ENCODE measurements at regions of chr5 and their contacts with region 1.

Region 1: DNA sequence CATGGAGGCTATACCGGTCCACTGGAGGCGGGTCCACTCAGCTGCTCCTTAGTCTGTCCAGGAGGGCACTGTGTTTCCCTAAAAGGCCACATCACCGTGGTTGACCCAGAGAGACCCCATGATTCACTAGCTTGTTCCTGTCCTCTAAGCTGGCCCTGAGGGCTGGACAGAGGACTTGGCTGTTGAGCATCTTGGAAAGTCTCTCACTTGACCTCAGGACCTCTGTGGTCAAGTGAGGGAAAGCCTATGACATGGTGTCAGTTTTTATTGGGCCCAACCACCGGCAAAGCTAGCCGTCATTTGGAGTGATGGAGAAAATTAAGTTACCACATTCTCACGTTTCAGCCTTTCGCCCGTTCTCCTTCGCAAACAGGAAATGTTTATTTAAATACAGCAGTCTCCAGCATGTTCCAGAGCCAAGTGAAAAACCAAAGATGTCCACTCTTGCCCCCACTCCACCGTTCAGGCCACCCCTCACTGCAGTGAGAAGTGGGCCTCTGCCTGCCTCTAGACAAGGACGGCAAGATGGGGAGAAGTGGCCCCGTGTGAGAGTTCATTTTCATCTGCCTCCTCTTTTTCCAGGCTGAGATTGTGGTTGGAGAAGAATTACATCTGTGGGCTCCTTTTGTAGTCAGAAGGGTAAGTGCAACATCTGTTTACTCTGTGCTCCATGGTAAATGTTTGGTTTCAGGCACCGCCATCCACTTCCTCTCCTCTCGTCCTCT is 4.4 kb downstream of the SLIT3 start:
- DNase-seq: no peak
- ATAC-seq: no peak
- H3K4me3 ChIP-seq: no peak overlapping the region
- H3K27ac ChIP-seq: no peak overlapping the region
- H3K4me1 ChIP-seq: no peaks in the 10 kb centered on the region
- H3K27me3 ChIP-seq: peaks cover 2 to 14% of the 10 kb centered on the region in 2 experiments; a peak in 4 of 5 replicates
- CTCF ChIP-seq: no peak
- EP300 ChIP-seq: no peak
- POLR2A ChIP-seq: no peak
- RAD21 ChIP-seq: no peak

Region 2: DNA sequence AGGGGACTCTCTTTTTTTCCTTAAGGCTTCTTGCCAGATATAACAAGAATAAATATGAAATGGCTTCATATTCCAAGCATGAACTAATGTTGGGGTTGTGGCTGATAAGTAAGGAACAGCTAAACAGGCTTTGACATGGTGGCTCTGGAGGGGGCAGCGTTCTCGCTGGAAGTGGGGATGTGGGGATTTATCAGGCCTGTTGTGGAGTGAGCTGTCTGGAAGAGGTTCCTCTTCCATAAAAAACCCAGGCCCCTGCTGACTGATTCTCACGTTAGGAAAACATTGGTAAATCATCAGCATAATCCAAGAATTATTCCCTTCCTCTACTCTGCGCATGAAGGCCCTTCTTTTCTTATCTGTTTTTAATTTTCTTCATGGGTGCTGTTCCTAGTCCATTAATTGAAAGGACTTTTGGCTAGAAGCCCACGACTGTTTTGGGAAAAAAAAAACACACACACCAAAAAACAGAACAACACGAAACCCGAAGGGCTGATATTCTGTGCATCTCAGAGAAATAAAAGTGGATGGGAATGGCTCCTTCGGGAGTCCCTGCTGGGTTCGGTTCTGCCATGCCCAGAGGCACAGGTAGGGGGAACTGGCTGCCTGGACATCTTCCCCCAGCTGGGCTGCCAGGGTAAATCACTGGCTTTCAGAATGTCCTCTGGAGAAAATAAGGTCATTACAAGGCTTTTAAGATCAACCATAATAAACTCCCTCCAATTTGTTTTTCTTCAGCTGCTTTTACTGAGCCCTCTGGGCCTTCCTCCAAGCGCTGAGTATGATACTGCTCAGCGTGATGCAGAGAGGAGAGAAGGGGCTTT is 292.6 kb before region 1 on chr5:
- CTCF ChIA-PET with region 1: no interaction called
- POLR2A ChIA-PET with region 1: no interaction called
- in situ Hi-C with region 1: no loop called
- intact Hi-C with region 1: loop called (anchors 5 kb)
- DNase-seq: no peak
- ATAC-seq: peak; percentile 66
- H3K4me3 ChIP-seq: no peak overlapping the region
- H3K27ac ChIP-seq: no peak overlapping the region
- H3K4me1 ChIP-seq: no peaks in the 10 kb centered on the region
- H3K27me3 ChIP-seq: peaks cover 2 to 23% of the 10 kb centered on the region in 2 experiments; a peak in 4 of 5 replicates
- CTCF ChIP-seq: no peak
- EP300 ChIP-seq: no peak
- POLR2A ChIP-seq: no peak
- RAD21 ChIP-seq: no peak

Measured in HepG2 (cell line).